PC-3 (cell line): ENCODE measurements at regions of chr7 and their contacts with region 1.

Region 1: GRCh38 chr7:85695041-85695996 is 508.5 kb upstream of the SEMA3D start:
- DNase-seq: peak; percentile 95
- ATAC-seq: peak; percentile 92
- H3K4me3 ChIP-seq: peak overlapping the region; percentile 52
- H3K27ac ChIP-seq: peak overlapping the region; percentile 85
- H3K4me1 ChIP-seq: peaks cover 37% of the 10 kb centered on the region
- H3K27me3 ChIP-seq: no peaks in the 10 kb centered on the region
- CTCF ChIP-seq: no peak

Region 2: GRCh38 chr7:85261336-85261735 is 434.0 kb before region 1 on chr7:
- CTCF ChIA-PET with region 1: no interaction called
- POLR2A ChIA-PET with region 1: no interaction called
- intact Hi-C with region 1: no loop called
- DNase-seq: no peak
- ATAC-seq: no peak
- H3K4me3 ChIP-seq: no peak overlapping the region
- H3K27ac ChIP-seq: no peak overlapping the region
- H3K4me1 ChIP-seq: no peaks in the 10 kb centered on the region
- H3K27me3 ChIP-seq: no peaks in the 10 kb centered on the region
- CTCF ChIP-seq: no peak

Region 3: DNA sequence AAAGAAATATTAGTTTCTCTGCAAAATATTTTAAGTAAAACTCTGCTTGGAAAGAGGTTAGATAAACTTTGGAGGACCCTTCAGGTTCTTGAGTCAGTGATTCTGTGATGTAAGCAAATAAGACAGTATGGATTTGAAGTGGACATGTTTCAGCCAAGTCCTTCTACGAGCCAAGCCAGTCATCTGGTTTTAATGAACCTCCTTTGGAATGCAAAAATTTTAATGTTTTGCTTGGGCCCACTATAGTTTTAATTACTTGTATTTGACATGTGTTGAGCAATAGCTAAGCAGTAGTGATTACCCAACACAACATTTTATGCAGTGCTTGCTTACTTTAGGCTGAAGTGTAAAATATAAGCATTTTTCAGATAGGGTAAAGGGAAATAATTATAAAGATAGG is 212.1 kb before region 1 on chr7:
- CTCF ChIA-PET with region 1: no interaction called
- POLR2A ChIA-PET with region 1: no interaction called
- intact Hi-C with region 1: no loop called
- DNase-seq: no peak
- ATAC-seq: no peak
- H3K4me3 ChIP-seq: no peak overlapping the region
- H3K27ac ChIP-seq: no peak overlapping the region
- H3K4me1 ChIP-seq: no peaks in the 10 kb centered on the region
- H3K27me3 ChIP-seq: no peaks in the 10 kb centered on the region
- CTCF ChIP-seq: no peak

Region 4: GRCh38 chr7:85719981-85720963 is 25.0 kb after region 1 on chr7:
- CTCF ChIA-PET with region 1: no interaction called
- POLR2A ChIA-PET with region 1: no interaction called
- intact Hi-C with region 1: loop called (anchors 1 kb)
- DNase-seq: peak; percentile 80
- ATAC-seq: peak; percentile 90
- H3K4me3 ChIP-seq: peak overlapping the region; percentile 42; the same call in 1 of the 2 replicates
- H3K27ac ChIP-seq: peak overlapping the region; percentile 91
- H3K4me1 ChIP-seq: peaks cover 23% of the 10 kb centered on the region
- H3K27me3 ChIP-seq: no peaks in the 10 kb centered on the region
- CTCF ChIP-seq: no peak